Activated CD8-positive, alpha-beta T cell treated with anti-CD3 and anti-CD28 coated beads for 36 hours (primary cell): ENCODE measurements at regions of chr6 and their contacts with region 1.

Region 1: GRCh38 chr6:32785781-32786533 is 22.6 kb upstream of the HLA-DQB2 start:
- DNase-seq: peak; percentile 40
- ATAC-seq: peak; percentile 67
- H3K4me3 Mint-ChIP-seq: no peak overlapping the region
- H3K27ac Mint-ChIP-seq: no peak overlapping the region
- H3K4me1 Mint-ChIP-seq: no peaks in the 10 kb centered on the region
- H3K27me3 Mint-ChIP-seq: peaks cover 34% of the 10 kb centered on the region
- CTCF ChIP-seq: peak; percentile 74

Region 2: GRCh38 chr6:32432050-32432450 is 353.9 kb before region 1 on chr6:
- CTCF ChIA-PET with region 1: interaction called, 19 read pairs
- POLR2A ChIA-PET with region 1: no interaction called
- intact Hi-C with region 1: no loop called
- DNase-seq: no peak
- ATAC-seq: no peak
- H3K4me3 Mint-ChIP-seq: no peak overlapping the region
- H3K27ac Mint-ChIP-seq: no peak overlapping the region
- H3K4me1 Mint-ChIP-seq: no peaks in the 10 kb centered on the region
- H3K27me3 Mint-ChIP-seq: peaks cover 2% of the 10 kb centered on the region
- CTCF ChIP-seq: peak; percentile 64

Region 3: DNA sequence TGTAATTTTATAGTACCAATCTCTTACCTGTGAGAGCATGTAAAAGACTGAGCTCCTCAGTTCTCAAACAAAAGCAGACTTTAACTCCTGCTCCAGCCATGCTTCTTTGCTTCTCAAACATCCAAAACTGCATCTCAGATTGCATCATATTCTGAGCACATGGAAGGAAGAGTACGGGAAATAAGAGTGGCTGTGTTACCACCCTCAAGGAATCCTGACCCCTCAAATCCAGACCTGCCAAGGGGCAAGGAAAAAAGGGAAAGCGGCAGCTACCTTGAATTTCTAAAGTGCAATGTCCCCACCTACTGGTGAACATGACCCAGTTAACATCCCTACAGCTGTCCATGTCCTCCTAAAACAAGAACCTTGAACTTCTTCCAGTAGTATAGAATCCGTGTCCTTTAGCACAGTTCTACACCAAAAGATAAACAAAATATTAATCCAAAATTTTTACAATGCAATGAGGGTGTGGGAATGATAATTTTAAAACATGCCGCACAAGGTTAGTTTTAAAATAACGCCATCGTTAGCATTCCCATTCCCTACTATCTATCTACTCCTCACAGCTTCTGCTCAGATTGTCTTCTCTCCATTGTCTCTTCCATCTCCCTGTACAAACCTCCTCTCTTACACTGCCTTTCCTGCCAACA is 85.4 kb before region 1 on chr6:
- CTCF ChIA-PET with region 1: interaction called, 33 read pairs
- POLR2A ChIA-PET with region 1: no interaction called
- intact Hi-C with region 1: no loop called
- DNase-seq: peak; percentile 22
- ATAC-seq: peak; percentile 42
- H3K4me3 Mint-ChIP-seq: no peak overlapping the region
- H3K27ac Mint-ChIP-seq: no peak overlapping the region
- H3K4me1 Mint-ChIP-seq: no peaks in the 10 kb centered on the region
- H3K27me3 Mint-ChIP-seq: peaks cover 30% of the 10 kb centered on the region
- CTCF ChIP-seq: peak; percentile 89

Region 4: GRCh38 chr6:32763427-32763826 is 22.5 kb before region 1 on chr6 and contains the start of gene HLA-DQB2:
- CTCF ChIA-PET with region 1: interaction called, 10 read pairs
- POLR2A ChIA-PET with region 1: no interaction called
- intact Hi-C with region 1: no loop called
- DNase-seq: no peak
- ATAC-seq: no peak
- H3K4me3 Mint-ChIP-seq: no peak within 1 kb of the TSS
- H3K27ac Mint-ChIP-seq: no peak within 1 kb of the TSS
- H3K4me1 Mint-ChIP-seq: no peaks in the 10 kb centered on the region
- H3K27me3 Mint-ChIP-seq: peaks cover 27% of the 10 kb centered on the region
- CTCF ChIP-seq: no peak
- total RNA-seq, gene HLA-DQB2: 0.60 TPM in 1 of 2 experiments, not detected in the other

Region 5: DNA sequence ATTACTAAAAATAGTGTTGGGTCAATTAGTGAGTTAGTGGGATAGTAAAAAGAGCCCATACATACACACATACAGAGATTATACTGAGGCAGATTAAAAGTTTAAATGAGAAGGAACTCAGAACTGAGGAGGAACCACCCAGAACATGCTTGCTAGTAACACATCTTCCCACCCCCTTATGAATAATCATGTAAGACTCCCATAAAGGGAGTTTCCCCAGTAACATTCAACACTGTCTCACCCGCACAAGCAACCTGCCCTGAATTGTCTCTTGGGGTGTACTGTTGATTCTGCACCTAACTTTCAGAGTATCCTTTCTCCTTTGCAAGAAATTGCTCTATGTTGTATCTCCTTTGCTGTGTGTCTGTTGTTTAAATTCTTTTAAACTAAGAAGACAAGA is 11.5 kb before region 1 on chr6:
- CTCF ChIA-PET with region 1: interaction called, 11 read pairs
- POLR2A ChIA-PET with region 1: no interaction called
- intact Hi-C with region 1: no loop called
- DNase-seq: no peak
- ATAC-seq: peak; percentile 56
- H3K4me3 Mint-ChIP-seq: no peak overlapping the region
- H3K27ac Mint-ChIP-seq: no peak overlapping the region
- H3K4me1 Mint-ChIP-seq: no peaks in the 10 kb centered on the region
- H3K27me3 Mint-ChIP-seq: peaks cover 19% of the 10 kb centered on the region
- CTCF ChIP-seq: no peak

Region 6: DNA sequence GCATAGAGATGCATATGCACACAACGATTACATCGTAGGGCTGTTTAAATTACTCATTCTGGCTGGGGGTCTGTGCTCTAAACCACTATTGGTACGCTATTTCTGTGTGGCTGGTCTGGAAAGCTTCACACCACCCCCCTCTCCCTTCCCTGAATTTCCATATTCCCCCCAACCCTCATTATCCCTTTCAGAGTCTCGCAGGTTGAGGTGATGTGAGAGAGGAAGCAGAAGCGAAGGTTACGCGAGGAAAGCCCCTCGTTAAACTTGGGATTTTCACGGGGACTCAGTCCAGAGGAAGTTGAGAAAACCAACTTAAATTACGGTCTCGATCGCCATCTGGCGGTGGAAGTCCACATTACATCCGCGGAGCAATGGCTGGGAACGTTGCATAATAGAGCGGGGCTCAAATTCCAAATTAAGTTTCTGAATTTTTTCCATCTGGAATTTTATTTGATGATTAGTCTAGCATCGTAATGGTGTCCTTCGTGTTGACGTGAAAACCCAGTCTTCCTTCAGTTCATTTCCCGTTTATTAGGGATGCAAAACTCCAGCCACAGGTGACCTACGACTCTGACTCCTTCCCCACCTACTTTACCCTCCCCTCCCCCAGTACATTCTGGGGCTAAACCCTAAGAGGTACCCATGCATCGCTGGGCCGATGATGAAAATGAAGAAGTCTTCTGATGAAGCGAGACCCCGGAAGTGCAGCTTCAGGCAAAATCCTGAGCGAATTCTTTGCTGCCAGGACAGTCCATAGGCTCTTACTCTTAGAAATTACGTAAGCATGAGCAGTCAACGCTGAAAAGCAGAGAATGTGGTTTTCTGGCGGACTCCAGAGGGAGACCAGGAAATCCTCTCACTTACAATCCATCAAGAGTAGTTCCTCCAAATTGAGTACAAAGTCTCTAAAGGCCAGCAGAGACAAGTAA is 11.2 kb after region 1 on chr6:
- CTCF ChIA-PET with region 1: interaction called, 18 read pairs
- POLR2A ChIA-PET with region 1: no interaction called
- intact Hi-C with region 1: no loop called
- DNase-seq: peak; percentile 90
- ATAC-seq: peak; percentile 87
- H3K4me3 Mint-ChIP-seq: peak overlapping the region; percentile 64
- H3K27ac Mint-ChIP-seq: no peak overlapping the region
- H3K4me1 Mint-ChIP-seq: peaks cover 23% of the 10 kb centered on the region
- H3K27me3 Mint-ChIP-seq: peaks cover 41% of the 10 kb centered on the region
- CTCF ChIP-seq: peak; percentile 90

Region 7: GRCh38 chr6:32906539-32906938 is 120.6 kb after region 1 on chr6:
- CTCF ChIA-PET with region 1: no interaction called
- POLR2A ChIA-PET with region 1: no interaction called
- intact Hi-C with region 1: no loop called
- DNase-seq: no peak
- ATAC-seq: no peak
- H3K4me3 Mint-ChIP-seq: no peak overlapping the region
- H3K27ac Mint-ChIP-seq: no peak overlapping the region
- H3K4me1 Mint-ChIP-seq: no peaks in the 10 kb centered on the region
- H3K27me3 Mint-ChIP-seq: peaks cover 5% of the 10 kb centered on the region
- CTCF ChIP-seq: no peak

Region 8: DNA sequence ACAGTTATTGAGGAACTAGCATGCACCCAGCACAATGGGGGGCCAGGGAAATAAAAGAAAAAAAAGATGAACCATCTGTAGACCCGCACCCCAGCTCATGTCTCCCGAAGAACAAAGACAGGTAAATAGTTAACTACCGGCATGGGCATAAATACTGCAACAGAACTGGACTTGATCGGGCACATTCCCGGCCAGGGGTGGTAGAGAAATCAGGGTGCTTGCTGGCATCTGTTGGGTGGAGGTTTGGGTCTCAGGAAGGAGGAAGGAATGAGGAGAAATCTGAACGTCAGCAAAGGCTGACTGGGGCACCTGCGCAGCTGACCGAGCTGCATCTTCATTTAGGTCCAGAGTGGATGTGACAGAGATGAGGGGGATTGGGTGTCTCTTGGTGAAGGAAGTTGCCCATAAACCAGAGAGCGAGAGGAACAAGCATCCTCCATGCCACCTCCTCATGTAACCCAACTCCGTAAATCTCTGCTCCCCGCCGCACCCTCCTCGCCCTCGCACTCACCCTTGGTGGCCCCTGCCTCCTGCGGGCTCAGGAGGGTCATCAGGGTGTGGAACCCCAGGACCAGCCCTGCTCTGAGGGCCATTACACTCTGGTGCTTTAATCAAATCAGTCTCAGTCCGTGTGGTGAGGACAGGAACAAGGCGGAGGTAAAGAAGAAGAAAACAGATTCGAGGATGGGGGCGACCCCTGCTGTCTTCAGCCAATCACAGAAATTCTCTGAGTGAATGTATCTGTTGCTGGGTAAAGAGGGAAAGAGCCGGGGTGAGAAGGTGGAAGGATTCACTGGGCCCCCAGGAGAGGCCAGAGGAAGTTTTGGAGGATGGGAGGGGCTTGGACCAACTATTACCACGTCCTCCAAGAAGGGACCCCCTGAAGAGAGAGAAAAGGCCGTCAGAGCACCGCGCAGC is 223.2 kb after region 1 on chr6 and contains the start of gene HLA-DOA:
- CTCF ChIA-PET with region 1: no interaction called
- POLR2A ChIA-PET with region 1: no interaction called
- intact Hi-C with region 1: no loop called
- DNase-seq: peak; percentile 83
- ATAC-seq: peak; percentile 99
- H3K4me3 Mint-ChIP-seq: peak within 1 kb of the TSS; percentile 84
- H3K27ac Mint-ChIP-seq: peak within 1 kb of the TSS; percentile 81
- H3K4me1 Mint-ChIP-seq: peaks cover 24% of the 10 kb centered on the region
- H3K27me3 Mint-ChIP-seq: no peaks in the 10 kb centered on the region
- CTCF ChIP-seq: no peak
- total RNA-seq, gene HLA-DOA: 6.4 to 8.1 TPM